Activated B cell treated with CpG ODN at 0.5 μM for 24 hours (primary cell): ENCODE measurements at regions of chr20 and their contacts with region 1.

Region 1: GRCh38 chr20:59495894-59496510 is 108.3 kb upstream of the PHACTR3 start:
- DNase-seq: peak; percentile 59
- ATAC-seq: peak; percentile 40
- H3K4me3 Mint-ChIP-seq: no peak overlapping the region
- H3K27ac Mint-ChIP-seq: no peak overlapping the region
- H3K4me1 Mint-ChIP-seq: no peaks in the 10 kb centered on the region
- H3K27me3 Mint-ChIP-seq: peaks cover 16% of the 10 kb centered on the region
- CTCF ChIP-seq: peak; percentile 92

Region 2: GRCh38 chr20:58864350-58864749 is 631.7 kb before region 1 on chr20:
- CTCF ChIA-PET with region 1: interaction called, 15 read pairs
- POLR2A ChIA-PET with region 1: no interaction called
- intact Hi-C with region 1: loop called (anchors 1 kb)
- DNase-seq: no peak
- ATAC-seq: peak; percentile 54
- H3K4me3 Mint-ChIP-seq: no peak overlapping the region
- H3K27ac Mint-ChIP-seq: no peak overlapping the region
- H3K4me1 Mint-ChIP-seq: no peaks in the 10 kb centered on the region
- H3K27me3 Mint-ChIP-seq: peaks cover 22% of the 10 kb centered on the region
- CTCF ChIP-seq: no peak

Region 3: DNA sequence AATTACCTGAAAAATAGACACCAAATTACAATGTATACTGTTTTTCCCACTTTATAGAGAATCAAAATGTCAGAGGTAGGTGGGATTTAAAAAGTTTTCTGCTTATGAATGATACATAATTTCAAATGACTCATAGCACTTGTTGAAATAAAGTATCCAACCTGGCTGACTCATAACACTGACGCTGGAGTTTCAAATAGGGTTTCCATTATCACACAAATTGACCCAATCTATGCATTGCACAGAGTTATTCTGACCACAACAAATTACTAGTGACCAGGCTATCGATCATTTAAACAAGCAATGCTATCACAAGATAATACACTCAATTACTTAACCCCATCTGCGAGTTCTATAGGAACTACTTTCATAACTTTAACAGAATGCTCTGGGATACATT is 421.6 kb before region 1 on chr20:
- CTCF ChIA-PET with region 1: no interaction called
- POLR2A ChIA-PET with region 1: no interaction called
- intact Hi-C with region 1: loop called (anchors 5 kb)
- DNase-seq: no peak
- ATAC-seq: no peak
- H3K4me3 Mint-ChIP-seq: no peak overlapping the region
- H3K27ac Mint-ChIP-seq: no peak overlapping the region
- H3K4me1 Mint-ChIP-seq: peaks cover 31% of the 10 kb centered on the region
- H3K27me3 Mint-ChIP-seq: peaks cover 18% of the 10 kb centered on the region
- CTCF ChIP-seq: no peak

Region 4: DNA sequence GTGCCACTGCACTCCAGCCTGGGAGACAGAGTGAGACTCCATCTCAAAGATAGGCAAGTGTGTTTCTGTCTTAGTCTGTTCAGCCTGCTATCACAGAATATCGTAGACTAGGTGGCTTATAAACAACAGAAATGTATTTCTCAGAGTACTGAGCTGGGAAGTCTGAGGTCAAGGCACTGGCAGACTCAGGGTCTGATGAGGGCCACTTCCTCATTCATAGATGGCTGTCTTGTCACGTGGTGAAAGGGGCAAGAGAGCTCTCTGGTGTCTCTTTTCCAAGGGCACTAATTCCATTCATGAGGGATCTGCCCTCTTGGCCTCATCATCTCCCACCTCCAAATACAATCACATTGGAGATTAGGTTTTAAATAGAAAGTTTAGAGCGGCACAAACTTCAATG is 12.7 kb after region 1 on chr20:
- CTCF ChIA-PET with region 1: interaction called, 20 read pairs
- POLR2A ChIA-PET with region 1: no interaction called
- intact Hi-C with region 1: no loop called
- DNase-seq: no peak
- ATAC-seq: no peak
- H3K4me3 Mint-ChIP-seq: no peak overlapping the region
- H3K27ac Mint-ChIP-seq: no peak overlapping the region
- H3K4me1 Mint-ChIP-seq: no peaks in the 10 kb centered on the region
- H3K27me3 Mint-ChIP-seq: peaks cover 9% of the 10 kb centered on the region
- CTCF ChIP-seq: no peak